ENCODE measurements at regions of chr14 and their contacts with region 1.

Region 1: DNA sequence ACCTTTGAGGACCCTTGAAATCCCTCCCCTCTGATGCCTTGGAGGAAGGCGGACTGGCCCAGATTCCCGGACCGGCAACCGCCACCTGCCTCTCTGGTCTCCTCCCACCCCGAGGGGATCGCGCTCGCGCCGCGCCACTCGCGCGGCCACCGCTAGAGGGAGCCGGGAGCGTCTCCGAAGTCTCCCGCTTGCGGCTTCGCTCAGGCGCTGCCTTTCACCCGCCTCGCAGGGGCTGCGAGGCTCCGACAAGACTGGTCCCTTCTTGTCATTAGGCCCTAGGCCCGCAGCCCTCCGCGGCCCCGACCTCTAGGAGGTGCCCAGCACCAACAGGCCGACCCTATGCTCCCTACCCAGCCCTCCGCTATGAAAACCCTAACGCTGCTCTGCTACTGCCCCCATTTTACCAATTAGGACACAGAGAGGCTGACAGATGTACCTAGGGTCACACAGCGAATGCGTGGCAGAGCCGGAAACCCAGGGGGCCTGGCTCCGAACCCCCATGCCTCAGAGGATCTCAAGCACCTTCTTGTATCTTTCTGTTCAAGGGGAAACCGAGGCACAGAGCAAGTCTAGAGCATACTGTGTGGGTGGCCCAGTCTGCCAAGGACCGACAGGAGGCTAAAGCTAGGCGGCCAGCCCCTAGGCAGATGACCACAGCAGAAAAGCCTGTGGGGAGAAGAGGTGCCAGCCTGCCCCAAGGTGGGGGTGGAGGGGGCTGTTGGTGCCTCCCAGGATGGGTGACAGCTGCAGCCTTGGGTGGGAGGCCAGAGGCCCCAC is 21.4 kb upstream of the VSX2 start:
- DNase-seq: peak; percentile 63
- H3K4me3 Mint-ChIP-seq: no peak overlapping the region
- H3K27ac Mint-ChIP-seq: no peak overlapping the region
- H3K4me1 Mint-ChIP-seq: no peaks in the 10 kb centered on the region
- H3K27me3 Mint-ChIP-seq: peaks cover 28% of the 10 kb centered on the region

Region 2: GRCh38 chr14:74190907-74191575 is 26.8 kb before region 1 on chr14:
- intact Hi-C with region 1: no loop called
- DNase-seq: no peak
- H3K4me3 Mint-ChIP-seq: no peak overlapping the region
- H3K27ac Mint-ChIP-seq: no peak overlapping the region
- H3K4me1 Mint-ChIP-seq: no peaks in the 10 kb centered on the region
- H3K27me3 Mint-ChIP-seq: peaks cover 2% of the 10 kb centered on the region

Region 3: DNA sequence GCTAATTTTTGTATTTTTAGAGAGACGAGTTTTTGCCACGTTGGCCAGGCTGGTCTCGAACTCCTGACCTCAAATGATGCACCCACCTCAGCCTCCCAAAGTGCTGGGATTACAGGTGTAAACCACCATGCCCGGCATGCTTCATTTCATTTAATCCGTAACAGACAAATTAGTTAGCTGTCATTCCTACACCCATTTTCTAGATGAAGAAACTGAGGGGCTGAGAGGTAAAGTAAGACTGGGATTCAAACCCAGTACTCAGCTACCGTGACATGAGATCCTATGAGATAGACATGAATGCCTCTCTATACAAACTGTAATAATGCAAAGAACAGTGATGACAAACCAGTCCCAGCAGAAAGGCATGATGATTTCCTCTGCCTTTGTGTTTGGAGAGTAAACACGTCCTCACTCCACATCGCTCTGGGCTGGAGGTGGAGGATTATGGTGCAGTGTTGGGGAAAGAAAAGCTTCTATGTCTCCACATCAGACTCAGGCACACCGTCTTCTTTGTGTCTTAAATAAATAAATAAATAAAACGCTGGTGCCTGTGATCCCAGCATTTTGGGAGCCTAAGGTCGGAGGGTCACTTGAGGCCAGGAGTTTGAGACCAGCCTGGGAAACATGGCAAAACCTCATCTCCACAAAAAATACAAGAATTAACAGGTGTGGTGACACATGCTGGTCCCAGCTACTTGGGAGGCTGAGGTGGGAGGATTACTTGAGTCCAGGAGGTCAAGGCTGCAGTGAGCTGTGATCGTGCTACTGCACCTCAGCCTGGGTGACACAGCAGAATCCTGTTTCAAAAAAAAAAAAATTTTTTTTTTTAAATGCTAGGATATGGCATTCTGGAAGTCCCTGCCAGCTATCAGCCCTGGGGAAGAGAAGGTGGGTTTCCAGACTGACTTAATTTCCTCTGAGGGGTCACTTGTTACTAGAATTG is 31.8 kb after region 1 on chr14:
- intact Hi-C with region 1: loop called (anchors 1 kb)
- DNase-seq: no peak
- H3K4me3 Mint-ChIP-seq: no peak overlapping the region
- H3K27ac Mint-ChIP-seq: no peak overlapping the region
- H3K4me1 Mint-ChIP-seq: peaks cover 7% of the 10 kb centered on the region
- H3K27me3 Mint-ChIP-seq: peaks cover 43% of the 10 kb centered on the region

Region 4: GRCh38 chr14:74281069-74281468 is 63.2 kb after region 1 on chr14:
- intact Hi-C with region 1: no loop called
- DNase-seq: no peak
- H3K4me3 Mint-ChIP-seq: no peak overlapping the region
- H3K27ac Mint-ChIP-seq: no peak overlapping the region
- H3K4me1 Mint-ChIP-seq: no peaks in the 10 kb centered on the region
- H3K27me3 Mint-ChIP-seq: peaks cover 3% of the 10 kb centered on the region

Measured in activated T-helper 1 cell treated with anti-CD3 and anti-CD28 coated beads, Interleukin-12 subunit alpha, Interleukin-12 subunit beta, Interleukin-2, Interleukin-4 antibody, amounts not matched to agents 30 ng/mL and 10 ng/mL and 1 ng/mL, durations not matched to agents 14 hours and 24 hours and 36 hours (primary cell).